Panc1 (cell line): ENCODE measurements at regions of chr20 and their contacts with region 1.

Region 1: DNA sequence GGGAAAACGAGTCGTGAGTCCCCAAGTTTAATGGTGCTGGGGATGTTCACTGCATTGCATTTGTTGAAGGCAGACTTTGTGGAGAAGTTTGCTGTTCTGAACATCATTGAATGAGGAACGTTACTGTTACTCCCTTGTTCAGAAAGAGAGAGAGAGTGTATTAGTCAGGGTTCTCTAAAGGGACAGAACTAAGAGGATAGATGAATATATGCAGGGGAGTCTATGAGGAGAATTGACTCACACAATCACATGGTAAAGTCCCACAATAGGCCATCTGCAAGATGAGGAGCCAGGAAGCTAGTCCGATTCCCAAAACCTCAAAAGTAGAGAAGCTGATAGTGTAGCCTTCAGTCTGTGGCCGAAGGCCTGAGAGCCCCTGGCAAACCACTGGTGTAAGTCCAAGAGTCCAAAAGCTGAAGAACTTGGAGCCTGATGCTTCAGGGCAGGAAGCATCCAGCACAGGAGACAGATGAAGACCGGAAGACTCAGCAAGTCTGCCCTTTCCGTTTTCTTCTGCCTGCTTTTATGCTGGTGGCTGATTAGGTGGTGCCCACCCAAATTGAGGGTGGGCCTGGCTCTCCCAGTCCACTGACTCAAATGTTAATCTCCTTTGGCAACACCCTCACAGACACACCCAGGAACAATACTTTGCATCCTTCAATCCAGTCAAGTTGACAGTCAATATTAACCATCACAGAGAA is 223.5 kb upstream of the PCSK2 start:
- DNase-seq: no peak
- ATAC-seq: no peak
- H3K4me3 ChIP-seq: no peak overlapping the region
- H3K27ac ChIP-seq: no peak overlapping the region
- H3K4me1 ChIP-seq: no peaks in the 10 kb centered on the region
- H3K27me3 ChIP-seq: no peaks in the 10 kb centered on the region
- CTCF ChIP-seq: no peak

Region 2: DNA sequence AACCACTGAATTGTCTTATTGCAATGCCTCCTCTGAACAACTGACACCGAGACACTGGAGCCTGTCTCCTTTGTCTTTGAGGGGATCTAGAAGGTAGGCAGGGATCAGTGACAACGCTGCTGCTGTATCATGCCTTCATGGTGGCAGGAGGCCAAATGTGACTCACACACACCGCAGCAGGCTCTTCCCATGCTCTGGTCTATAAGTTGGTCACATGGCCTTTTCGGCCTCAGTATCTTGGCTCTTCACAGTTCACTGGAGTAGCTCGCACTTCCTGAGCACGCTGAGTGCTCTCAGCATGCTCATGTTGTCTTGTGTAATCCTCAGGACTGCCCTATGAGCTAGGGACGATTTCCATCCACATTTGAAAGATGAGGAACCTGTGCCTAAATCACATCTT is 56.1 kb after region 1 on chr20:
- CTCF ChIA-PET with region 1: no interaction called
- POLR2A ChIA-PET with region 1: no interaction called
- in situ Hi-C with region 1: no loop called
- intact Hi-C with region 1: no loop called
- DNase-seq: no peak
- ATAC-seq: no peak
- H3K4me3 ChIP-seq: no peak overlapping the region
- H3K27ac ChIP-seq: no peak overlapping the region
- H3K4me1 ChIP-seq: no peaks in the 10 kb centered on the region
- H3K27me3 ChIP-seq: no peaks in the 10 kb centered on the region
- CTCF ChIP-seq: no peak

Region 3: DNA sequence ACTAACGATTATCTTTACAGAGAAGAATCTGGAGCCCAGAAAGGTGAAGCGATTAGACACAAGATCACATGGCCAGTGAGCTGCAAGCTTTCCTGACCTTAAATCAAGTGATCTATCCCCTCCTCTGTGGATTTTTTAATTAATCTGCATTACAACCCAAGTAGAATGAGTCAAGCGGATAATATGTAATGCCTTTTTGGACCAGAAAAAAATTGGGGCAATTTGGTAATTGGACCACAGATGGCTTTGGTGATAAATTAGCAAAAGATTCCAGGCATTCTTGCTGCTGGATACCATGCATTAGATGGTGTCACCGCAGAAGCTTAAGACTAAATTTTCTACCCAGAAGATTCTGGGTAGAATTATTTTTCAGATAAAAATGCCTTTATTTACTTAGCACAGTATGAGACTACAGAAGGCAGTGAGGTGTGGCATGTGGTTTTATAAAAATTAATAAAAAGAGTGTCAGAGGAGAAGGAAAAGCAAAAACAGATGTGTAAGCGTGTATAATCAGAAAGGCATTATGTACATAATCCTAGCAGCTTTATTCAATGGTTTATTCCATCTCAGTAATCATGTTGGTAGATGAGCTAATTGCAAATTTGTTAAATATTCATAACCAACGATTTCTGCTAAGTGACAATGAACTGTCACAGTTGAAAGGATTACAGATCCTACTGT is 169.7 kb after region 1 on chr20:
- CTCF ChIA-PET with region 1: interaction called, 12 read pairs
- POLR2A ChIA-PET with region 1: no interaction called
- in situ Hi-C with region 1: no loop called
- intact Hi-C with region 1: no loop called
- DNase-seq: no peak
- ATAC-seq: no peak
- H3K4me3 ChIP-seq: no peak overlapping the region
- H3K27ac ChIP-seq: no peak overlapping the region
- H3K4me1 ChIP-seq: no peaks in the 10 kb centered on the region
- H3K27me3 ChIP-seq: no peaks in the 10 kb centered on the region
- CTCF ChIP-seq: no peak

Region 4: GRCh38 chr20:17202673-17203072 is 199.4 kb after region 1 on chr20:
- CTCF ChIA-PET with region 1: no interaction called
- POLR2A ChIA-PET with region 1: no interaction called
- in situ Hi-C with region 1: no loop called
- intact Hi-C with region 1: no loop called
- DNase-seq: no peak
- ATAC-seq: no peak
- H3K4me3 ChIP-seq: no peak overlapping the region
- H3K27ac ChIP-seq: no peak overlapping the region
- H3K4me1 ChIP-seq: no peaks in the 10 kb centered on the region
- H3K27me3 ChIP-seq: peaks cover 25% of the 10 kb centered on the region
- CTCF ChIP-seq: no peak